BJ (cell line): ENCODE measurements at regions of chr1 and their contacts with region 1.

Region 1: GRCh38 chr1:9874959-9875635 is 35.0 kb downstream of the CTNNBIP1 start:
- DNase-seq: no peak
- H3K4me3 ChIP-seq: no peak overlapping the region
- H3K27me3 ChIP-seq: no peaks in the 10 kb centered on the region
- CTCF ChIP-seq: peak; percentile 95

Region 2: DNA sequence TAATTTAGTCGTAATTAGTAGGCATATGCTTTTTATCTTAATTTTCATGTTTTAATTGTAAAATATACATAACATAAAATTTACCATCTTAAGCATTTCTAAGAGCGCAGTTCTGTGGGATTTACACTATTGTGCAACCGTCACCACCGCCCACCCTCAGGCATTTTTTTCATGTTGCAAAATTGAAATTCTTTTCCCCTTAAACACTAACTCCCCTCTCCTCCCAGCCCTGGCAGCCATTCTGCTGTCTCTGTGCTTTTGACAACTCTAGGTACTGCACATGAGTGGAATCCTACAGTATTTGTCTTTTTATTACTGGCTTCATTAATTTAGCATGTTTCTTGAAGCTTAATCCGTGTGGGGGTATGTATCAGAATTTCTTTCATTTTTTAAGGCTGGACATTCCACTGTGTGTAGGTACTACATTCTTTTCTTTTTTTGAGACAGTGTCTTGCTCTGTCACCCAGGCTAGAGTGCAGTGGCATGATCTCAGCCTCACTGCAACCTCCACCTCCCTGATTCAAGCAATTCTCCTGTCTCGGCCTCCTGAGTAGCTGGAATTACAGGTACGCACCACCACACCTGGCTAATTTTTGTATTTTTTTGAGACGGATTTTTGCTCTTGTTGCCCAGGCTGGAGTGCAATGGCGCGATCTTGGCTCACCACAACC is 215.6 kb before region 1 on chr1:
- CTCF ChIA-PET with region 1: no interaction called
- POLR2A ChIA-PET with region 1: no interaction called
- DNase-seq: peak; percentile 74
- H3K4me3 ChIP-seq: no peak overlapping the region
- H3K27me3 ChIP-seq: no peaks in the 10 kb centered on the region
- CTCF ChIP-seq: no peak

Region 3: DNA sequence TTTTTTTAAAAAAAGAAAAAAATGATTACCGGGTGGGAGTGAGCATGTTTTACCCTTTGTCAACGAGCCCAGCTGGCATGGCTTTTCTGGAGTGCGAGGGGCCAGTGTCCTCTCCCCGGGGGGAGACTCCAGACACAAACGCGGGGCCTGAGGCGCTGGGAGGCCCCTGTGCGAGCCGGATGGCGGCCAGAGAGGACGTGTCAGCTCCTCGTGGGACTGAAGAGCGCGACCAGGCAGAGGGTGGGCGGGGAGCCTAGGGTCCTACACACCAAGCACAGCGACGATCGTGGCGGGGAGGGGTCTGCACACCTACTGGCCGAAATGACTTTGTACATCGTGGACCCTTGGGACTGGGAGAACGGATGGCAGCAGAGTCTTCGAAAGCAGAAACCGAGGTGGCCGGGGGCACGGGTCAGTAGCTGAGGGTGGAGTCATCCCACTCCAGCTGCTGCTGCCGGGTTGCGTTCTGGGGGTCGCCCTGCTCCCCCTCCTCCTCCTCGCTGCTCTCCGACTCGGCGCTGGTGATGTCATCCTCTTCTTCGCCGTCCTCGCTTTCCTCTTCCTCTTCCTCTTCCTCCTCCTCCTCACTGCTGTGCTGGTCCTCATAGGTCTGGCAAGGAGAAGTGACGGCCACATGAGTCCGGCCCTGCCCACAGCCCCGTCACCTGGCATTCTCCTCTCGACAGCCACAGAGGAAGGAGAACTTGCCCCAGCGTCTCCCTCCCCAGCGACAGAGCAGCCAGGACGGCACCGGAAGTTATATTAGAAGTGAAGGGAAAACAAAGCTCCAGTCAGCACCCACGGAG is 144.8 kb before region 1 on chr1:
- CTCF ChIA-PET with region 1: no interaction called
- POLR2A ChIA-PET with region 1: no interaction called
- DNase-seq: no peak
- H3K4me3 ChIP-seq: no peak overlapping the region
- H3K27me3 ChIP-seq: no peaks in the 10 kb centered on the region
- CTCF ChIP-seq: no peak

Region 4: DNA sequence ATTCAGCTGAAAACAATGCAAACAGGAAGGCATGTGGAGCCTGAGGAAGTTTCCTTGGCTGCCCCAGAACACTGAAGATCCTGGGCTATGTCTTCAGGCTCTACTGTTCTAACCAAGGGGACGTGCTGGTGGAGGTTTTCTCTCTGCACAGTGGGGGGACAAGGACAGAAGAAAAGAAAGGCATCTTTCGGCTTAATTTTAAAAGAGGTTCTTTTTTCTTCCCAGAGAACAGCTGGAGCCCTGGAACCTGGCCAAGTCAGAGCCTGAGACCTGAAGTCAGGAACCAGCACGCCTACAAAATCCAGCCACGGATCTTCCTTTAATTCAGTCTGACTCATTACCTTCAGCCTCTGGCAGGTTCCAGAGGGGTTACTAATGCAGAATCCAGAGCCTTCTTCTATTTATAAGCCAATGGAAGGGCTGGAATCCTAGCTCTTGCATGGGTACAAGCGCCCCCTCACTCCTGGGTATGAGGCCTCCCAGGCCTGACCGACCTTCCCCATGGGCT is 15.2 kb after region 1 on chr1:
- CTCF ChIA-PET with region 1: interaction called, 21 read pairs
- POLR2A ChIA-PET with region 1: no interaction called
- DNase-seq: peak; percentile 61
- H3K4me3 ChIP-seq: no peak overlapping the region
- H3K27me3 ChIP-seq: no peaks in the 10 kb centered on the region
- CTCF ChIP-seq: no peak

Region 5: DNA sequence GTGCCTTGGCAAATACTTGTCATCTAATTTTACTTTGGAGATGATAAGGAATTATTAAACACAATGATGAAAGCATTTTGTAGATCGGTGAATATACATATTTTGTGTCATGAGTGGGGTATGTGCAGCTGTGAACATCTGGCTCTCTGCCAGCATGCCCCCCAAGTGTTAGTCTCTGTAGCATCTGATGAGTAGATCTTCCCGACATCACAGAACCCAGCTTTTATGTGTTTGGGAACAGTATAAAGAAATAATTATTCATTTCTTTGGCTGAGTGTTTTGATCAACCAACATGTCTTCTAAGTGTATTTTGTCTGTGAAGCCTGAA is 39.5 kb after region 1 on chr1:
- CTCF ChIA-PET with region 1: interaction called, 11 read pairs
- POLR2A ChIA-PET with region 1: interaction called, 4 read pairs
- DNase-seq: no peak
- H3K4me3 ChIP-seq: no peak overlapping the region
- H3K27me3 ChIP-seq: no peaks in the 10 kb centered on the region
- CTCF ChIP-seq: no peak

Region 6: GRCh38 chr1:9942939-9943788 is 68.1 kb after region 1 on chr1 and contains the starts of genes LZIC and NMNAT1:
- CTCF ChIA-PET with region 1: interaction called, 45 read pairs
- POLR2A ChIA-PET with region 1: no interaction called
- DNase-seq: peak; percentile 37
- H3K4me3 ChIP-seq: peak within 1 kb of the TSS; percentile 91
- H3K27me3 ChIP-seq: no peaks in the 10 kb centered on the region
- CTCF ChIP-seq: no peak
- polyA plus RNA-seq, gene LZIC: 9.1 and 19.4 TPM in 2 replicates
- polyA plus RNA-seq, gene NMNAT1: 9.8 and 12.4 TPM in 2 replicates

Region 7: DNA sequence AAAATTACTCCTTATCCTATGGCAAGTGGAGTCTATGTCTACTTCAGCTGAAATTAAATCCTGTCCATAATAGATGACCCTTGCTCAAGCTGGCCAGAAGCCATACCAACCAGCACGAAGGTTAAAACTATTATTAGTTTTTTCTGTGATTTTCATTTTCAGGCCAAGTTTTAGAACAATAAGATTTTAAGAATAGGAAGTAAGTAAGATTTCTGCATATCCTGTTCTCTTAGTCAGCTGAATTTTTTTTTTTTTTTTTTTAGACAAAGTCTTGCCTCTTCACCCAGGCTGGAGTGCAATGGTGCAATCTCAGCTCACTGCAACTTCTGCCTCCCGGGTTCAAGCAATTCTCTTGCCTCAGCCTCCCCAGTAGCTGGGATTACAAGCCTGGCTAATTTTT is 115.8 kb after region 1 on chr1:
- CTCF ChIA-PET with region 1: no interaction called
- POLR2A ChIA-PET with region 1: no interaction called
- DNase-seq: no peak
- H3K4me3 ChIP-seq: no peak overlapping the region
- H3K27me3 ChIP-seq: no peaks in the 10 kb centered on the region
- CTCF ChIP-seq: no peak